SK-N-SH (cell line): ENCODE measurements at regions of chr17 and their contacts with region 1.

Region 1: GRCh38 chr17:30104575-30105339 is 11.9 kb upstream of the NSRP1 start:
- DNase-seq: peak; percentile 79
- H3K4me3 ChIP-seq: peak overlapping the region; percentile 55 to 62
- H3K27ac ChIP-seq: peak overlapping the region; percentile 17 to 95; a peak in 3 of 4 replicates
- H3K4me1 ChIP-seq: peaks cover 0 to 2% of the 10 kb centered on the region in 2 experiments; a peak in 1 of 4 replicates
- H3K27me3 ChIP-seq: no peaks in the 10 kb centered on the region
- CTCF ChIP-seq: peak; percentile 98
- EP300 ChIP-seq: peak in 1 of 2 experiments; percentile 49; a peak in 2 of 4 replicates
- RAD21 ChIP-seq: peak; percentile 90

Region 2: DNA sequence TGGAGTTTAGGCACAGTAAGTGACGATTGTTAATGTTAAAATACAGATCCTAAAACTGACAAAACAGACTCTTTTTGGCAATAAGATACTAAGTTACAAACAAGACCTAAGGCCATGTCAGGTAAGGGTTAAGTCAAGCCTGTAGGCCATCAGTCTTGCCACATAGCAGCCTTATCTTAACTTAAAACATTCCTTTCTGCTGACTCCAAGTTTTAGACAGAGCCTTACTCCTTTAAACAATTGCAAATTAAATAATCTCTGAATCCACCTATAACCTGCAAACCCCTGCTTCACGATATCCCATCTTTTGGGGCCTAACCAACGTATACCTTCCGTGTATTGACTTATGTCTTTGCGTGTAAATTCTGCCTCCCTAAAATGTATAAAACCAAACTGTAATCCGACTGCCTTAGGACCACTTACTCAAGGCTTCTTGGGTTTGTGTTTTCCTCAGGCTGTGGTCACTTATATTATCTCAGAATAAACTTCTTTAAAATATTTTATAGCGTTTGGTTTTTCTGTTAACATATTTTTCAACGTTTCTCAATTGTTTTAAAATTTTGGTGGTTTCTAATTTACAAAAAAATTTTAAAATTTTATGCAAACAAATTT is 98.9 kb before region 1 on chr17:
- CTCF ChIA-PET with region 1: no interaction called
- POLR2A ChIA-PET with region 1: no interaction called
- DNase-seq: no peak
- H3K4me3 ChIP-seq: no peak overlapping the region
- H3K27ac ChIP-seq: no peak overlapping the region
- H3K4me1 ChIP-seq: peaks cover 0 to 4% of the 10 kb centered on the region in 2 experiments; a peak in 1 of 4 replicates
- H3K27me3 ChIP-seq: no peaks in the 10 kb centered on the region
- CTCF ChIP-seq: no peak
- EP300 ChIP-seq: no peak
- RAD21 ChIP-seq: no peak

Region 3: GRCh38 chr17:30116661-30117551 is 12.1 kb after region 1 on chr17 and contains the start of gene NSRP1:
- CTCF ChIA-PET with region 1: interaction called, 34 read pairs
- POLR2A ChIA-PET with region 1: interaction called, 5 read pairs
- DNase-seq: peak; percentile 87
- H3K4me3 ChIP-seq: peak within 1 kb of the TSS; percentile 76 to 82
- H3K27ac ChIP-seq: peak within 1 kb of the TSS; percentile 95
- H3K4me1 ChIP-seq: peaks cover 3 to 9% of the 10 kb centered on the region in 2 experiments; a peak in 2 of 4 replicates
- H3K27me3 ChIP-seq: no peaks in the 10 kb centered on the region
- CTCF ChIP-seq: no peak
- EP300 ChIP-seq: no peak
- RAD21 ChIP-seq: no peak
- polyA plus RNA-seq, gene NSRP1: 9.6 and 10.8 TPM in 2 replicates

Region 4: GRCh38 chr17:30137158-30137557 is 32.4 kb after region 1 on chr17:
- CTCF ChIA-PET with region 1: no interaction called
- POLR2A ChIA-PET with region 1: no interaction called
- DNase-seq: no peak
- H3K4me3 ChIP-seq: no peak overlapping the region
- H3K27ac ChIP-seq: no peak overlapping the region
- H3K4me1 ChIP-seq: no peaks in the 10 kb centered on the region; a peak in 1 of 4 replicates
- H3K27me3 ChIP-seq: no peaks in the 10 kb centered on the region
- CTCF ChIP-seq: no peak
- EP300 ChIP-seq: no peak
- RAD21 ChIP-seq: no peak

Region 5: DNA sequence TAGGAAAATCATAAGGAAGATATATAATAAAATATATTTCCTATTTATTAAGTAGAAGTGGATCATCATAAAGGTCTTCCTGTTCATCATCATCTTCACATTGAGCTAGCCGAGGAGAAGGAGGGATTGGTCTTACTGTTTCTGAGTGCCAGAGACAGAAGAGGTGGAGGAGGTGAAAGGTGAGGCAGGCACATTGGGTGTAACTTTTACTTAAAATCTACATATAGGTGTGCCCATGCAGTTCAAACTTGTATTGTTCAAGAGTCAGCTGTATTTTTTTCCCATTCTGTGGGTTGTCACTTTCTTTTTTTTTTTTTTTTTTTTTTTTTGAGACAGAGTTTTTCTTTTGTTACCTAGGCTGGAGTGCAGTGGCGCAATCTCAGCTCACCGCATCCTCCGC is 46.7 kb after region 1 on chr17:
- CTCF ChIA-PET with region 1: no interaction called
- POLR2A ChIA-PET with region 1: no interaction called
- DNase-seq: no peak
- H3K4me3 ChIP-seq: no peak overlapping the region
- H3K27ac ChIP-seq: no peak overlapping the region
- H3K4me1 ChIP-seq: no peaks in the 10 kb centered on the region
- H3K27me3 ChIP-seq: no peaks in the 10 kb centered on the region
- CTCF ChIP-seq: no peak
- EP300 ChIP-seq: no peak
- RAD21 ChIP-seq: no peak

Region 6: DNA sequence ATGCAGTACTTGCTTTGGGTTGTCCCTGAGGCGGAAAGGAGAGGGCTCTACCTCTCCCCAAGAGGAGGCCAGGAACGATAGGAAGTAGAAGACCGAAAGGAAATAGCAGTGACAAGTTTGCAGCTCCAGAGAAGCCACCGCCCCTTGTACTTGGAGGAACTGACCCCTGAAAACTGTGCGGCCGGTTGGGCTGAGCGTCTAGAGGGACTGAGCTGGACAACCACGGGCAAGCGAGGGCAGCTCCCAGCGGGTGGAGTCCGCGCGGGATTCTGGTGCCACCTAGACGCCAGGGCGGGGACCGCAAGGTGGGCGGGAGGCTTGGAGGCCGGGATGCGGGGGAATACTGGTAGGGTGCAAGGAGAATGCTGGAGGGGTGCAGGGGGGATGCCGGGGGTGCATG is 132.0 kb after region 1 on chr17:
- CTCF ChIA-PET with region 1: interaction called, 40 read pairs
- POLR2A ChIA-PET with region 1: interaction called, 3 read pairs
- DNase-seq: peak; percentile 87
- H3K4me3 ChIP-seq: no peak overlapping the region; a peak in 2 of 4 replicates
- H3K27ac ChIP-seq: no peak overlapping the region
- H3K4me1 ChIP-seq: peaks cover 0 to 8% of the 10 kb centered on the region in 2 experiments; a peak in 1 of 4 replicates
- H3K27me3 ChIP-seq: peaks cover 24% of the 10 kb centered on the region
- CTCF ChIP-seq: peak; percentile 29
- EP300 ChIP-seq: no peak
- RAD21 ChIP-seq: peak; percentile 68

Region 7: GRCh38 chr17:30278032-30278431 is 173.3 kb after region 1 on chr17:
- CTCF ChIA-PET with region 1: interaction called, 66 read pairs
- POLR2A ChIA-PET with region 1: interaction called, 3 read pairs
- DNase-seq: peak; percentile 45
- H3K4me3 ChIP-seq: no peak overlapping the region
- H3K27ac ChIP-seq: no peak overlapping the region
- H3K4me1 ChIP-seq: no peaks in the 10 kb centered on the region
- H3K27me3 ChIP-seq: no peaks in the 10 kb centered on the region
- CTCF ChIP-seq: peak; percentile 64
- EP300 ChIP-seq: no peak
- RAD21 ChIP-seq: peak; percentile 84

Region 8: GRCh38 chr17:30336369-30337171 is 231.8 kb after region 1 on chr17:
- CTCF ChIA-PET with region 1: interaction called, 22 read pairs
- POLR2A ChIA-PET with region 1: no interaction called
- DNase-seq: peak; percentile 43
- H3K4me3 ChIP-seq: no peak overlapping the region
- H3K27ac ChIP-seq: no peak overlapping the region
- H3K4me1 ChIP-seq: peaks cover 7 to 16% of the 10 kb centered on the region in 2 experiments; a peak in 2 of 4 replicates
- H3K27me3 ChIP-seq: no peaks in the 10 kb centered on the region
- CTCF ChIP-seq: peak; percentile 86
- EP300 ChIP-seq: no peak
- RAD21 ChIP-seq: peak; percentile 67